ENCODE measurements at regions of chr19 and their contacts with region 1.

Region 1: GRCh38 chr19:18557474-18558201 is at the start of gene KXD1:
- DNase-seq: peak; percentile 98 to 99
- ATAC-seq: peak; percentile 98
- H3K4me3 ChIP-seq: peak within 1 kb of the TSS; percentile 88
- H3K27ac ChIP-seq: peak within 1 kb of the TSS; percentile 93
- H3K4me1 ChIP-seq: peaks cover 18% of the 10 kb centered on the region
- H3K27me3 ChIP-seq: no peaks in the 10 kb centered on the region
- CTCF ChIP-seq: no peak
- total RNA-seq, gene KXD1: 38.9 to 76.5 (median 50.8) TPM

Region 2: DNA sequence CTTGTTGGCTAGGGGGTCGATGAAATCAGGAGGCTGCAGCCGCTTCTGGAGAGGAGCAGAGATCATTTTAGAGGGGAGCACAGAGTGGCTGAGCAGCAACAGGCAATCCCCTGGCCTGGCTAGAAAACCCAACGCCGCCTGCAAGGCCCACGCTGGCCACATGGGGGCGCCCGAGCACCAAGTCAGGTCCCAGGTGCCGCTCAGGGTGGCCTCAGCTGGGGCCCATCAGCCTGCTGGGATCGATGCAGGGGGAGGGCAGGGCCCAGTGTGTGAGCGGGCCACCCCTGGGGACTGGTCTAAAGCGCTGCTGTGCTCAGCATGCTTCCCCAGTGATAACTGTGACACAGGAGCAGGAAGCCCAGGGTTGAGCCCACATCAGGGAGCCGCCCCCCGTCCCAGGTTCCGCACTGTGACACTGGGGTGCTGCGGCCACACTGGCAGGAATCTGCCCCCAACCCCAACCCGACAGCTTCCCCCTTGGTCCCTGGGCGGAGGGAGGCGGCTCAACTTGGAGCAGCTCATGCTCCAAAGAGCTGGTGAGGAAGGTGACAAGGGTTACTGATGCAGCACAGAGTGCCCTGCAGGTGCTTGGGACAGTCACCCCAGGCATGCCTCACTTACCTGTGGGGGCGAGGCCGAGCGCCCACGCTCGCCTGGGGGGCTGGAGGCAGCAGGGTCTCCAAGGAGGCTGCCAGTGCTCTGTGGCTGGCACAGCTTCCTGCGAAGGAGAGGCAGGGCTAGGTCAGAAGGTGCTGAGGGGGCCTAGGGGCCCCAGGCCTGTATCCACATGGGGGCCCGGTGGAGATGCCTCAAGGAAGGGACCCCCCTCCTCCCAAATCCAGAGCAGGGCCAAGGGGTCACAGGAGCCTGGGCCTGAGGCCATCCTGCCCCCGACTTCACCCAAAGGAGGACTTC is 106.5 kb before region 1 on chr19:
- intact Hi-C with region 1: loop called in 1 of 2 experiments (anchors 5 kb)
- DNase-seq: peak; percentile 85 to 94
- ATAC-seq: peak; percentile 79 to 90 (median 84)
- H3K4me3 ChIP-seq: no peak overlapping the region
- H3K27ac ChIP-seq: peak overlapping the region; percentile 23
- H3K4me1 ChIP-seq: peaks cover 13% of the 10 kb centered on the region
- H3K27me3 ChIP-seq: no peaks in the 10 kb centered on the region
- CTCF ChIP-seq: peak; percentile 97

Region 3: DNA sequence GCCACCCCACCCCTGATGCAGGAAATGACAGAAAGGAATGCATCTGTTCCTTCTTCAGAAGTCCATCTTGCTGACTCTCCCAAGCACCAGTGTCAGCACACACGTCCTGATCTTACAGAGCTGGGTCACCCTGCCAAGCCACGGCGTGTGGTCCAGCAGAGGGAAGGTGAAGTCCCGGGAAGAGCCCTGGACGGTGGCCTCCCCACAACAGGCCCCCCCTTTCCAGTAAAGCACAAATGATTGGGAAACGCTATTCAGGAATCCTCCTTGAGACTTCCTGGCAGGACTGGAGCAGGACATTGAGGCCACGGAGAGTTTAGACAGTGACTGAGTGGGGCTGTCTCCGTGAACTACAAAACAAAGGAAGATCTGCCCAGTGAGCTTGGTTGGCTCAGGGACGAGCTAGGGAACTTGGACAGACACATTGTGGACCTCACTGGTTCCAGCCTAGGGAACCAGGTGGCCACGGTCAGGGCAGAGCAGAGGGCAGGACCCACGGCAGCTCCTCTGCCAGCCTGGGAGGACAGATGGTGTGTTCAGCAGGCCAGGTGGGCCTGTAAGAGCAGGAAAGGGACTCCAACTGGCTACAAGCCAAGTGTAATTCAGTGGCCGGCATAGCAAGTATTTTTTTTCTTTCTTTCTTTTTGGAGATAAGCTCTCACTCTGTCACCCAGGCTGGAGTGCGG is 77.5 kb before region 1 on chr19:
- intact Hi-C with region 1: loop called in 1 of 2 experiments (anchors 5 kb)
- DNase-seq: peak; percentile 90 to 92
- ATAC-seq: peak; percentile 71 to 83 (median 82)
- H3K4me3 ChIP-seq: no peak overlapping the region
- H3K27ac ChIP-seq: peak overlapping the region; percentile 91
- H3K4me1 ChIP-seq: peaks cover 93% of the 10 kb centered on the region
- H3K27me3 ChIP-seq: no peaks in the 10 kb centered on the region
- CTCF ChIP-seq: no peak

Region 4: GRCh38 chr19:18603255-18603957 is 45.8 kb after region 1 on chr19:
- intact Hi-C with region 1: no loop called
- DNase-seq: peak in 1 of 2 donors; percentile 22
- ATAC-seq: peak in 3 of 4 donors; percentile 20 to 38 (median 35)
- H3K4me3 ChIP-seq: no peak overlapping the region
- H3K27ac ChIP-seq: no peak overlapping the region
- H3K4me1 ChIP-seq: peaks cover 10% of the 10 kb centered on the region
- H3K27me3 ChIP-seq: peaks cover 0 to 60% (median 27%) of the 10 kb centered on the region in 3 donors
- CTCF ChIP-seq: no peak

Measured in psoas muscle (tissue), 8 donors.